Activated CD4-positive, alpha-beta memory T cell treated with anti-CD3 and anti-CD28 coated beads, Interleukin-2, amount 10 ng/mL, durations not matched to agents 7 days and 5 days (primary cell): ENCODE measurements at regions of chr5 and their contacts with region 1.

Region 1: GRCh38 chr5:96934708-96935558 is 947 bp upstream of the LNPEP start:
- DNase-seq: peak; percentile 97
- H3K4me3 Mint-ChIP-seq: peak overlapping the region; percentile 80
- H3K27ac Mint-ChIP-seq: peak overlapping the region; percentile 96
- H3K4me1 Mint-ChIP-seq: peaks cover 48% of the 10 kb centered on the region
- H3K27me3 Mint-ChIP-seq: no peaks in the 10 kb centered on the region

Region 2: GRCh38 chr5:96825243-96825642 is 109.7 kb before region 1 on chr5:
- CTCF ChIA-PET with region 1: no interaction called
- POLR2A ChIA-PET with region 1: no interaction called
- DNase-seq: no peak
- H3K4me3 Mint-ChIP-seq: no peak overlapping the region
- H3K27ac Mint-ChIP-seq: no peak overlapping the region
- H3K4me1 Mint-ChIP-seq: peaks cover 22% of the 10 kb centered on the region
- H3K27me3 Mint-ChIP-seq: peaks cover 7% of the 10 kb centered on the region

Region 3: DNA sequence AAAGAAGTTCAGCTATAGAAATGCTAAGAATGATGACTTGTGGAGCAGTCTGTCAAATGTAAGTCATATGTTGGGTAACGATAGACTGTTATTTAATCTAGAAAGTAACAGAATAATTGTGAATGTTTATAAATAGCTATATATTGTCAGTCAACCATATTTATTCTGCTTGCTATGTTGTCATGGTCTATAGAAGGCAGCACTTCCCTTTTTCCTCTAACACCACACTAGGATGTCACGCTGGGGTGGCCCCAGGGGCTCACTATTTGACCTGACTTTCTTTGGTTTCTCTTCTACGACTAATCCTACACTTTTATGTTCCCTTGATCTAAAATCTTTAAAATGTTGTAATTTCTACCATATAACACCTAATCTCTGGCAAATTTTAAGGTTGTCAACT is 38.1 kb before region 1 on chr5:
- CTCF ChIA-PET with region 1: interaction called, 3 read pairs
- POLR2A ChIA-PET with region 1: interaction called, 18 read pairs
- DNase-seq: no peak
- H3K4me3 Mint-ChIP-seq: peak overlapping the region; percentile 67
- H3K27ac Mint-ChIP-seq: peak overlapping the region; percentile 87
- H3K4me1 Mint-ChIP-seq: peaks cover 47% of the 10 kb centered on the region
- H3K27me3 Mint-ChIP-seq: no peaks in the 10 kb centered on the region

Region 4: GRCh38 chr5:96924016-96924443 is 10.9 kb before region 1 on chr5:
- CTCF ChIA-PET with region 1: no interaction called
- POLR2A ChIA-PET with region 1: interaction called, 10 read pairs
- DNase-seq: no peak
- H3K4me3 Mint-ChIP-seq: no peak overlapping the region
- H3K27ac Mint-ChIP-seq: peak overlapping the region; percentile 38
- H3K4me1 Mint-ChIP-seq: peaks cover 23% of the 10 kb centered on the region
- H3K27me3 Mint-ChIP-seq: no peaks in the 10 kb centered on the region

Region 5: DNA sequence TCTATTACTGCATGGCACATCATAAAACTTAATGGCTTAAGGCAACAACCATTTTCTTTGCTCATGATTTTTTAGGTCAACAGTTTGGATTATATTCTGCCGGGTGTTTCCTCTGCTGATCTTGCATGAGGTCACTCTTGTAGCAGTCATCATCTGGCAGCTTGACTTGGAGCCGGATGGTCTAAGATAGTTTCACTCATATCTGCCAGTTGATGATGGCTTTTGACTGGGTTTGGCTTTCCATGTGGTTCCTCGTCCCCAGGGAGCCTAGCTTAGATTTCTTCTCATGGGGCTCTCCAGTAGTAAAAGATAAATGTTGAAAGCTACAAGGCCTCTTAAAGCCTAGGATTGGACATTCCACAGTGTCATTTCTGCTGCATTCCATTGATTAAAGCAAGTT is 28.3 kb after region 1 on chr5:
- CTCF ChIA-PET with region 1: interaction called, 8 read pairs
- POLR2A ChIA-PET with region 1: interaction called, 138 read pairs
- DNase-seq: peak; percentile 36
- H3K4me3 Mint-ChIP-seq: no peak overlapping the region
- H3K27ac Mint-ChIP-seq: peak overlapping the region; percentile 74
- H3K4me1 Mint-ChIP-seq: peaks cover 56% of the 10 kb centered on the region
- H3K27me3 Mint-ChIP-seq: no peaks in the 10 kb centered on the region

Region 6: DNA sequence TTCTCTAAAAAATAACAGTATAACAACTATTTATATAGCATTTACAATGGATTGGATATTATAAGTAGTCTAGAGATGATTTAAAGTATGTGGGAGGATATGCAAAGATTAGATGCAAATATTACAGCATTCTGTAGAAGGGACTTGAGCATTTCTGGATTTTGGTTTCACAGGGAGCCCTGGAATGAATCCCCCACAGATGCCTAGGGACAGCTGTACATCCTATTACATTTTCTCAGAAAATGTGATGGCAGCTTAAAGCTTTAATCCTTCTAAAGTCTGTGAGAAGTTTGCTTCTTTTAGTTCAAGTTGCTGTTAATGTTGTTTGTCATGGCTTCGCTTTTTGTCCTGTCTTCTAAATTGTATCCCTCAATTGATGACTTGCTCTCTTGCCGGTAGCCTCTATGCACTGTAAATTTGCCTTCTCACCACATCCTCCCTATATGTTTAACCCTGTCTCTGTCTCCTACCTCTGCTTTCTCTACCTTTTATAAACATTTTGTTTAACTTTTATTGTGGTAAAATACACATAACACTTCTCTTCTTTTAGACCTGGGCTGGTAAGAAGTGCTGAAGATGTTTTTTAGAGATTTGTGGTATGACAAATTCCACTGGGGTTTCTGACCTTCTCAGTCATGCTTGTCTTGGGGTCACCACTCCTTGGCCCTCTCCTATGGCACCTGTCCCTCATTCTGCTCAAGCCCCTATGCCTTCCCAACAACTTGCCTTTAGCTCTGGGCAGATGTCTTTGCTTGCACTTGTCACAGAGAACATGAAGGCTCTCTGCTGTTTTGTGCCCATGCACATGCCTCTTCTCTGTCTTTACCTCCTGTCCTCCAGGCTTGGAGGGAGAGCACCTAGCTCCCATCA is 38.8 kb after region 1 on chr5:
- CTCF ChIA-PET with region 1: no interaction called
- POLR2A ChIA-PET with region 1: interaction called, 11 read pairs
- DNase-seq: no peak
- H3K4me3 Mint-ChIP-seq: no peak overlapping the region
- H3K27ac Mint-ChIP-seq: peak overlapping the region; percentile 8
- H3K4me1 Mint-ChIP-seq: peaks cover 44% of the 10 kb centered on the region
- H3K27me3 Mint-ChIP-seq: no peaks in the 10 kb centered on the region